HepG2 (cell line): ENCODE measurements at regions of chr6 and their contacts with region 1.

Region 1: GRCh38 chr6:129498950-129499842 is 210.8 kb downstream of the ARHGAP18 start:
- DNase-seq: peak; percentile 58
- ATAC-seq: peak; percentile 68
- H3K4me3 ChIP-seq: no peak overlapping the region
- H3K27ac ChIP-seq: no peak overlapping the region
- H3K4me1 ChIP-seq: peaks cover 33% of the 10 kb centered on the region
- H3K27me3 ChIP-seq: no peaks in the 10 kb centered on the region
- CTCF ChIP-seq: peak; percentile 78
- EP300 ChIP-seq: 0 out of 4 replicates have a peak, but pooled peaks of 1 of the 2 experiments have one; percentile 8
- POLR2A ChIP-seq: no peak
- RAD21 ChIP-seq: peak; percentile 62; the same call in 1 of the 2 replicates

Region 2: GRCh38 chr6:128966934-128967333 is 532.3 kb before region 1 on chr6:
- CTCF ChIA-PET with region 1: no interaction called
- POLR2A ChIA-PET with region 1: no interaction called
- in situ Hi-C with region 1: no loop called
- intact Hi-C with region 1: no loop called
- DNase-seq: no peak
- ATAC-seq: no peak
- H3K4me3 ChIP-seq: no peak overlapping the region
- H3K27ac ChIP-seq: no peak overlapping the region
- H3K4me1 ChIP-seq: no peaks in the 10 kb centered on the region
- H3K27me3 ChIP-seq: no peaks in the 10 kb centered on the region; a peak in 1 of 5 replicates
- CTCF ChIP-seq: no peak
- EP300 ChIP-seq: no peak
- POLR2A ChIP-seq: no peak
- RAD21 ChIP-seq: no peak

Region 3: DNA sequence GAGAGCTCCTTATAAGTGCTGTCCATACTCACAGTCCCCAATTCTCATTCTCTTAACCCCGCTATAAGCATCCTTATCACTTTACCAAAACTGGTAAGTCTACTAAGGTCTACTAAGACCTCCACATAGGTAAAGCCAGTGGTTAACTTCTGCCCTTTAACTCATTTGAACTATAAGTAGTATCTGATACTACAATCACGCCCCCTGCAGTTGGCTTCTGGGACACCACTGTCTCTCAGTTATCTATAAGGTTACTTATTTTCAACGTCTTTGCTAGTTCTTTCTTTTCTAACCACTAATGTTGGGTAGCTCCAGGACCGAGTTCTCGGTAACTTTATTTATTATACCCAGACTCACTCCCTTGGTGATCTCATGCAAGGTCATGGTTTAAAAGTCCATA is 68.2 kb after region 1 on chr6:
- CTCF ChIA-PET with region 1: interaction called, 3 read pairs
- POLR2A ChIA-PET with region 1: no interaction called
- in situ Hi-C with region 1: no loop called
- intact Hi-C with region 1: loop called (anchors 2 kb)
- DNase-seq: peak; percentile 23
- ATAC-seq: peak; percentile 45
- H3K4me3 ChIP-seq: no peak overlapping the region
- H3K27ac ChIP-seq: no peak overlapping the region
- H3K4me1 ChIP-seq: no peaks in the 10 kb centered on the region
- H3K27me3 ChIP-seq: no peaks in the 10 kb centered on the region
- CTCF ChIP-seq: peak; percentile 47
- EP300 ChIP-seq: no peak
- POLR2A ChIP-seq: 0 out of 4 replicates have a peak, but pooled peaks of 1 of the 2 experiments have one; percentile 1
- RAD21 ChIP-seq: 0 out of 2 replicates have a peak, but pooled peaks have one; percentile 11

Region 4: GRCh38 chr6:129598244-129599187 is 99.3 kb after region 1 on chr6:
- CTCF ChIA-PET with region 1: no interaction called
- POLR2A ChIA-PET with region 1: no interaction called
- in situ Hi-C with region 1: no loop called
- intact Hi-C with region 1: loop called (anchors 1 kb)
- DNase-seq: peak; percentile 67
- ATAC-seq: peak; percentile 47
- H3K4me3 ChIP-seq: no peak overlapping the region
- H3K27ac ChIP-seq: no peak overlapping the region
- H3K4me1 ChIP-seq: peaks cover 26% of the 10 kb centered on the region
- H3K27me3 ChIP-seq: no peaks in the 10 kb centered on the region
- CTCF ChIP-seq: peak; percentile 79
- EP300 ChIP-seq: no peak
- POLR2A ChIP-seq: no peak
- RAD21 ChIP-seq: peak; percentile 83

Region 5: DNA sequence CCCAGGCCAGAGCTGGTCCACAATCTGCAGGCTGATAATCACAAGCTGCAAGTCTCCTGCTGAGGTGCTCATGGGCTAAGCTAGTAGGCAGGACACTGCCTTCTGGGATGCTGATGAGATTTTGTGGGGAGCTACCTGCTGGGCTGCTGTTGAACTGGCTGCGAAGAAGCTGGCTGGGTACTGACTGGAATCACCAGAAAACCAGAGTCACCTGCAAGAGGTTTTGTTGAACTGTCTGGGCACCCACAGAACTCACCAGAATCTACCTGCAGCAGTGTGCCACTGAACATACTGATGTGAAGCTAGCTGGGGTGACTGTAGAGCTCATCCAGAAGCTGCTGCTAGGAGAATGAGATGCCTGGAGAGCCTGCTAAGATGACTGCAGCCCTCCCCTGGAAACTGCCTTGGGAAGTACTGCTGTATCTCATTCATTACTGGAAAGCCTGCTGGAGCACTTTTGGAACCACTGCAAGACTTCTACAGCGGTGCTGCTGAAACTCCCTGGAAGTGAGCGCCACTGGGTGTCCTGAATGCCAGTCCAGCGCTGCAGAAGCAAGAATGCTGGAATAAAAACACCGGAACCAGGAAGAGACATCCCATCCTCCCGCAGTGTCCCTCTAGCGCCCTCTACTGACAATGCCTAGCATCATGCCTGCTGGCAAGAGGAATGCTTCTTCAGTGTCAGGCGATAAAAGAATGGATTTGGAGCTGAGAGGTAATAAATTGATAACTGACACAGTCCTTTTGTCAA is 275.7 kb after region 1 on chr6:
- CTCF ChIA-PET with region 1: interaction called, 15 read pairs
- POLR2A ChIA-PET with region 1: no interaction called
- in situ Hi-C with region 1: no loop called
- intact Hi-C with region 1: loop called (anchors 1 kb)
- DNase-seq: peak; percentile 85
- ATAC-seq: peak; percentile 98
- H3K4me3 ChIP-seq: peak overlapping the region; percentile 35 to 71 (median 40); a peak in 4 of 6 replicates
- H3K27ac ChIP-seq: no peak overlapping the region
- H3K4me1 ChIP-seq: peaks cover 6% of the 10 kb centered on the region
- H3K27me3 ChIP-seq: no peaks in the 10 kb centered on the region
- CTCF ChIP-seq: peak; percentile 97
- EP300 ChIP-seq: peak in 1 of 2 experiments; percentile 15; a peak in 1 of 4 replicates
- POLR2A ChIP-seq: no peak
- RAD21 ChIP-seq: peak; percentile 75

Region 6: DNA sequence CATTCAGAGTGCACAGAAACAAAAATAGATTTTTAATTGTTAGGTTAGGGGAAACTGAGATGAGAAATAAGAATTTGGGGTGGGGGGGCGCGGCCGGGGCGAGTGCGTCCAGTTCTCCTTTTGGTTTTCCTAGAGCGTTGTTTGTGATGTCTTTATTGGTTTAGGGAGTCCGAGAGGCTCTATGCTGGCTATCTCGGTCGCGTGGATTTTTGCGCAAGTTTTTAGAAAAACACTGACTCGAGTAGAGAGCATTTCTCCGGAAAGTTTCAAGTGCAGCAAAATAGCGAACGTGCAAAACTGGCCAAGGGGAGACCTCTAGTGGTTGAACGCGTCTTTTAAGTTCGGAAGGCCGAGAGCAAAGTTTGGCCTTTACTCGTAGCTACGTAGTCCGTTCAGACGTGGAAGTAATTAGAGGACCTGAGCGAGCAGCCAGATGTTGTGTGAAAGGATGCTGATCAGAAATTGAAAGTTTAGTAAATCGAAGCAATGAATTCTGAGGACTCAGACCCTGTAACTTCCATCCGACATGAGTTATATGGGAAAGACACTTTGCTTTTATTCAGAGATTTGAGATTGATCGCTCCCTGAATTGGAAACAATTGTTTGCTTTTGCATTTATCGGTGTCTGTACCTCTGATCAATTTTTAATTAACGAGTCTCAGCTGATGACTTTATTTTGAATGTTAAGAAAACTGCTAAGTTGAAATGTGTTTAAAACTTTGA is 521.9 kb after region 1 on chr6:
- CTCF ChIA-PET with region 1: interaction called, 6 read pairs
- POLR2A ChIA-PET with region 1: no interaction called
- in situ Hi-C with region 1: no loop called
- intact Hi-C with region 1: loop called (anchors 1 kb)
- DNase-seq: peak; percentile 81
- ATAC-seq: peak; percentile 85
- H3K4me3 ChIP-seq: peak overlapping the region; percentile 54 to 78 (median 62)
- H3K27ac ChIP-seq: no peak overlapping the region
- H3K4me1 ChIP-seq: peaks cover 5% of the 10 kb centered on the region; the same call in 1 of the 2 replicates
- H3K27me3 ChIP-seq: peaks cover 0 to 38% of the 10 kb centered on the region in 2 experiments; a peak in 3 of 5 replicates
- CTCF ChIP-seq: peak; percentile 93
- EP300 ChIP-seq: 0 out of 4 replicates have a peak, but pooled peaks of 1 of the 2 experiments have one; percentile 29
- POLR2A ChIP-seq: no peak
- RAD21 ChIP-seq: peak; percentile 74